K562 (cell line): ENCODE measurements at regions of chr3 and their contacts with region 1.

Region 1: DNA sequence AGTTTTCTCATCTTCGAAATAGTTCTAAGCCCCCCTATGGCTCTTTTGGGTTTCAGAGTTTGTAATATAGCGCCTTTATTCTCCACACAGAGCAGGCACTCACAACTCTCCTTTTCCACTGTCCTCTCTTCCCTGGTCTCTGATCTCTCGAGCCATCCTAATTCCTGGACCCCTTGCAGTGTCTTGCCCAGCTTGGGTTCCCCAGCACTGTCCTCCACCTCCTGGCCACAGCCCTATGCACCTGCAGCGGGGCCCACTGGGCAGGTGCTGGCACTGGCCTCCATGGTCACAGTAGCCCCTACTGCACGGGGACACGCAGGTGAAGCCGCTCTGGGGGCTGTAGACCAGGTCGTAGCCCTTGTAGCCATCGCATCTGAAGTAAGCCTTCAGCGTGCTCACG is 27.9 kb downstream of the MUC20 start:
- DNase-seq: no peak
- ATAC-seq: peak; percentile 5; the same call in 2 of the 3 replicates
- H3K4me3 ChIP-seq: no peak overlapping the region
- H3K27ac ChIP-seq: no peak overlapping the region
- H3K4me1 ChIP-seq: peaks cover 0 to 28% of the 10 kb centered on the region in 2 experiments; a peak in 3 of 5 replicates
- H3K27me3 ChIP-seq: peaks cover 12 to 43% of the 10 kb centered on the region in 2 experiments
- CTCF ChIP-seq: no peak
- EP300 ChIP-seq: no peak
- POLR2A ChIP-seq: no peak
- RAD21 ChIP-seq: no peak

Region 2: DNA sequence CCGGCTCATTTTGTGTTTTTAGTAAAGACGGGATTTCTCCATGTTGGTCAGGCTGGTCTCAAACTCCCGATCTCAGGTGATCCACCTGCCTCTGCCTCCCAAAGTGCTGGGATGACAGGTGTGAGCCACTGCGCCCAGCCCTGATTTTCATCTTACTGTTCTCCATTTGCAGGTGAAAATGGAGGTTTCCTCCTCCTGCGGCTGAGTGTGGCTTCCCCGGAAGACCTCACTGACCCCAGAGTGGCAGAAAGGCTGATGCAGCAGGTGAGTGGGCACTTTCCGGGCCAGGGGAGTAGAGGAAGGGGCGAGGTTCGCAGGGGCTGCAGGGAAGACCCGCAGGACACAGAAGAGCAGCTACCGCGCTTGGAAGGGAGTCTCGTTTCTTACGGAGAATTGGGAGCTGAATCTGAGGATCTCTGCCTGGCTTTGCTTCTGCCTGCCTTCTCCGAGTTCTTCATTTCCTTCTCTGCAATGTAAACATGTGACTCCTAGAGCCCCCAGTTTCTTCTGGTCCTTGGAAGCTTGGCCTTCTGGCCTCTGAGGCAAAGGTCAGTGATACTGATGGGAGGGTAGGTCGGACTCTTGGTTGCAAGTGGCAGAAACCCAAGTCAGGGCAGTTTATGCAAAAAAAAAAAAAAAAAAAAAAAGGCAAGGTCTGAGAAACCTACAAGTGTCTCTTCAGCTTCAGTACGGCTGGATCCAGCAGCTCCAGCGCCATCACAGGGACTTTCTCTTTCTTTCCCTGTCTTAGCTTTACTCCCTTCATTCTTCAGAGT is 19.0 kb before region 1 on chr3:
- CTCF ChIA-PET with region 1: interaction called, 5 read pairs
- POLR2A ChIA-PET with region 1: interaction called, 9 read pairs
- in situ Hi-C with region 1: no loop called
- intact Hi-C with region 1: loop called (anchors 1 kb)
- DNase-seq: no peak
- ATAC-seq: no peak
- H3K4me3 ChIP-seq: no peak overlapping the region
- H3K27ac ChIP-seq: no peak overlapping the region
- H3K4me1 ChIP-seq: no peaks in the 10 kb centered on the region; a peak in 1 of 5 replicates
- H3K27me3 ChIP-seq: peaks cover 25 to 52% of the 10 kb centered on the region in 2 experiments
- CTCF ChIP-seq: no peak
- EP300 ChIP-seq: no peak
- POLR2A ChIP-seq: no peak
- RAD21 ChIP-seq: no peak